ENCODE measurements at regions of chr7 and their contacts with region 1.

Region 1: DNA sequence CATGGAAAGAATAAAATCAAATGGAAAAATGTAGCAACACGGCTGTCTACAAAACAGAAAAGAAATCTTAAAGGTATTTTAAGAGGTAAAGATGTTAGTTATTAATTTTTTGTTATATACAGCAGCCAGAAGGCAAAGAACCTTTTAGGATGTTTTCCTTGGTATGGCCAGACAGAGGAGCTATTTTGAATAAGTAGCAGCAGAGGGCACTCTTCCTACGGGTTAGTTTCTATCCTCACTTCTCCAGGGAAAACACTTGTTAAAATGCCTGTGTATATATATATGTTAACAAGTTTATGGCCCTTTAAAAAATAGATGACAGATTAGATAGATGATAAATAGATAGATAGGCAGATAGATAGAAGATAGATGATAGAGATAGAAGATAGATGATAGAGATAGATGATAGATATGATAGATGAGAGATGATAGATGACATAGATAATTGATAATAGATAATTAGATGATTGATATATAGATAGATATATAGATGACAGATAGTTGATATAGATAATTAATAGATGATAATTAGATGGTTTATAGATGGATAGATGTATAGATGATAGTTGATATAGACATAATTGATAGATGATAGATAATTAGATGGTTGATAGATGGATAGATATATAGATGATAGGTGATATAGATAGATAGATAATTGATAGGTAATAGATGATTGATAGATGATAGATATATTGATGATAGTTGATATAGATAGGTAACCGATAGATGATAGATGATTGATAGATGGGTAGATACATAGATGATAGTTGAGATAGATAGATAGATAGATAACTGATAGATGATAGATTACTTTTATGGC is 57.8 kb upstream of the WIPF3 start:
- DNase-seq: no peak
- ATAC-seq: peak; percentile 73

Region 2: DNA sequence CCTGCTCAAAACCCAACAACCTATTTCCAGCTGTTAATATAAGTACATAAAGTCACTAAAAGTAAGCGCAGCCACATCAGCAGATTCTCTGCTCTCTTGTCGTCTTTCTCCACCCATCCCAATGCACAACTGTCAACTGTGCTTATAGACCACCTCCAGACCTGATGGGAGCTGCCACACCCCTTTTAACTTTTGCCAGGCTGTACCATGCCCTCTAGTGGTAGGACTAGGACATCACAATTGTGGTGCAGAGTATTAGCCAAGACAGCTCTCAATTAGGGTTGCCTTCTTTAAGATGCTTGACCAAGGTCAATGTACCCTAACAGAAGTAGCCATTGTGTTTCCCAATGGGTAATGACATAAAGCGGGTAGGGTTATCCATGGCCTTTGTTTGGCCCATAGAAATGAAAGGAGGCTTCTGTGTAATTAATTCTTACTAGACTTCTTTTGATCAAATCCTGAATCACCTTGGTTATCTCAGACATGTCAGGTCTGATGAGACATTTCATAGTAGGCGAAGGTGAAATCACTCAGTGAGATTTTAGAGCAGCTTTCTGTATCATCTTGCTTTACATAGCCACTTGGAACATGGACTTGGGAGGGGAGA is 173.0 kb after region 1 on chr7:
- intact Hi-C with region 1: loop called (anchors 5 kb)
- DNase-seq: no peak
- ATAC-seq: peak; percentile 89

Region 3: GRCh38 chr7:30062591-30062990 is 314.1 kb after region 1 on chr7:
- intact Hi-C with region 1: loop called (anchors 10 kb)
- DNase-seq: no peak
- ATAC-seq: peak; percentile 80

Measured in left ventricle myocardium superior (tissue), 1 donor.